Caco-2 (cell line): ENCODE measurements at regions of chr3 and their contacts with region 1.

Region 1: DNA sequence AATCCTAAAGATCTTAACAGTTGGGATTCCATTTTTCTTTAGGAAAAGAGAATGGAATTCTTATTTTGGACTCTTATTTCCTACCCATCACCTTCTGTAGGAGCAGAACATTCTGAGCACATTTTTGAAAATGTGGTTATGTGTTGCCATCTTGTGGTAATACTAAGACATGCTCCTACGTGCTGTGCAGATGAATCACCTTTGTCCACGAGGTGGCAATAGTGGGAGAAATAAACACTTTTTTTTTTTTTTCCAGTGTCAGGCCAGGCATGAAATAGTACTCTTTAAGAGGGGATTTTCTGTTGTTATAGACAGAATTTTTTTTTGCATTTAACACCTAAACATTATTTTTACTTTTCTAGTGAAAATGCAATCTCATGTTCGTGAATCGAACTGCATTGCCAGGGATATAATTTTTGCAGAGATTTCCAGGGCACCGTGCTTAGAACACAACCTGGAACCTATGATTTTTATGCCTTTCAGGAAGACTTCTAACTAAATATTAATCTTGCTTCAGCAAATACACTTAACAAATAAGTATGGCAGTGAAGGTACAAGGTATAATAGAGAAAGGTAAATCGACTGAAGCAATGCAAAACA is 196.6 kb downstream of the GAP43 start:
- DNase-seq: peak; percentile 59 to 70
- H3K4me3 ChIP-seq: no peak overlapping the region
- H3K4me3 Mint-ChIP-seq: no peak overlapping the region
- H3K27ac Mint-ChIP-seq: no peak overlapping the region
- H3K4me1 ChIP-seq: no peaks in the 10 kb centered on the region
- H3K4me1 Mint-ChIP-seq: no peaks in the 10 kb centered on the region
- H3K27me3 ChIP-seq: no peaks in the 10 kb centered on the region
- H3K27me3 Mint-ChIP-seq: no peaks in the 10 kb centered on the region
- CTCF ChIP-seq: peak; percentile 93 to 97

Region 2: DNA sequence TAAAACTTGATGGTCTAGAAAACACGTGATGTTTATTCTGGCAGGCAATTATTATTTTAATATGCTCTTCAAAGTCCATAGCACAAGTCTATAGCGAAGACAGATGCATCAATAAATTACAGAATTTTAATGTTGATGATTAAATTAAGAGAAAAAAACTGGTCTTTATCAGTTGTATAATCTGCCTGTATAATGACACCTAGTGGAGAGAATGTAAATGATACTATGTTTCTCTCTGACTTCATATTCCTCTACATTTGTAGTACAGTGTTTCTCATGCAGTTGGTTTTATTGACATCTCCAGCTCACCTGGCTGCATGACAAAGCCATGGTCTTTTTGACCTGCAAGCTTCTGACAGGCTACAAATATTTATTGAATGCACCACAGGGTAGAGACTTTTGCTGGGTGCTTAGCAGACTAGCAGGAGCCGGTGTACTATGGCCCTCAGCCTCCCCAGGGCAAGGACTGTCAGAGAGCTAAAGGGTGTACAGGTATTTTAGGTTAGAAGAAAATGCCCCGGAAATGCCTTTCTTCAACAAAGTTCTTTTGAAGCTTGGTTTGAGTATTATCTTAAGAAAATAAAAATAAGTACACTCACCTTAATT is 93.3 kb after region 1 on chr3:
- CTCF ChIA-PET with region 1: no interaction called
- POLR2A ChIA-PET with region 1: no interaction called
- intact Hi-C with region 1: loop called (anchors 10 kb)
- DNase-seq: no peak
- H3K4me3 ChIP-seq: no peak overlapping the region
- H3K4me3 Mint-ChIP-seq: no peak overlapping the region
- H3K27ac Mint-ChIP-seq: no peak overlapping the region
- H3K4me1 ChIP-seq: no peaks in the 10 kb centered on the region
- H3K4me1 Mint-ChIP-seq: no peaks in the 10 kb centered on the region
- H3K27me3 ChIP-seq: no peaks in the 10 kb centered on the region
- H3K27me3 Mint-ChIP-seq: peaks cover 6% of the 10 kb centered on the region
- CTCF ChIP-seq: peak; percentile 7 to 35